Activated CD4-positive, alpha-beta T cell treated with anti-CD3 and anti-CD28 coated beads for 36 hours (primary cell): ENCODE measurements at regions of chr17 and their contacts with region 1.

Region 1: GRCh38 chr17:76384222-76384986 is at the start of gene SPHK1:
- DNase-seq: peak; percentile 86
- ATAC-seq: peak; percentile 72
- H3K4me3 Mint-ChIP-seq: peak within 1 kb of the TSS; percentile 85
- H3K27ac Mint-ChIP-seq: peak within 1 kb of the TSS; percentile 81
- H3K4me1 Mint-ChIP-seq: peaks cover 12% of the 10 kb centered on the region
- H3K27me3 Mint-ChIP-seq: no peaks in the 10 kb centered on the region
- total RNA-seq, gene SPHK1: 7.4 to 11.7 TPM

Region 2: DNA sequence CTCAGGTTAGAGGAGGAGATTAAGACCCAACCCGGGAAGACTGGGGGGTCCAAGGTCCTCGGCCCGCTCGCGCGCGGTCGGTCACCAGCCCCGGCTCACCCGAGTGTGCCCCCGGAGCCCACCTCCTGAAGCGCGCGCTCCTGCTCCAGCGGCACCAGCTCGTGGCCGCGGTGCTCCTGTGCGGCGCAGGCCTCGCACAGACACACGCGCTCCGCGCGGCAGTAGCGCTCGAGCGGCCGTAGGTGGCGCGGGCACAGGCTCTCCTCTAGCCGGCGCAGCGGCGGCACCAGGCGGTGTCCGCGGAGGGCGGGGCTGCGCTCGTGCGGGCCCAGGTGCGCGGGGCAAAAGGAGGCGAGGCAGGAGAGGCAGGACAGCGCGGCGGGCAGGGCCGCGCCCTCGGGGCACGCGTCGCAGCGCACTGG is 506.6 kb before region 1 on chr17:
- CTCF ChIA-PET with region 1: no interaction called
- POLR2A ChIA-PET with region 1: no interaction called
- intact Hi-C with region 1: loop called in 1 of 2 experiments (anchors 1 kb)
- DNase-seq: peak; percentile 87
- ATAC-seq: peak; percentile 72
- H3K4me3 Mint-ChIP-seq: peak overlapping the region; percentile 91
- H3K27ac Mint-ChIP-seq: peak overlapping the region; percentile 94
- H3K4me1 Mint-ChIP-seq: peaks cover 26% of the 10 kb centered on the region
- H3K27me3 Mint-ChIP-seq: peaks cover 2% of the 10 kb centered on the region

Region 3: GRCh38 chr17:75896415-75897159 is 487.8 kb before region 1 on chr17 and contains the start of gene TRIM65:
- CTCF ChIA-PET with region 1: no interaction called
- POLR2A ChIA-PET with region 1: no interaction called
- intact Hi-C with region 1: loop called in 1 of 2 experiments (anchors 2 kb)
- DNase-seq: peak; percentile 86
- ATAC-seq: peak; percentile 85
- H3K4me3 Mint-ChIP-seq: peak within 1 kb of the TSS; percentile 84
- H3K27ac Mint-ChIP-seq: peak within 1 kb of the TSS; percentile 72
- H3K4me1 Mint-ChIP-seq: peaks cover 19% of the 10 kb centered on the region
- H3K27me3 Mint-ChIP-seq: no peaks in the 10 kb centered on the region
- total RNA-seq, gene TRIM65: 28.9 to 31.9 TPM

Region 4: DNA sequence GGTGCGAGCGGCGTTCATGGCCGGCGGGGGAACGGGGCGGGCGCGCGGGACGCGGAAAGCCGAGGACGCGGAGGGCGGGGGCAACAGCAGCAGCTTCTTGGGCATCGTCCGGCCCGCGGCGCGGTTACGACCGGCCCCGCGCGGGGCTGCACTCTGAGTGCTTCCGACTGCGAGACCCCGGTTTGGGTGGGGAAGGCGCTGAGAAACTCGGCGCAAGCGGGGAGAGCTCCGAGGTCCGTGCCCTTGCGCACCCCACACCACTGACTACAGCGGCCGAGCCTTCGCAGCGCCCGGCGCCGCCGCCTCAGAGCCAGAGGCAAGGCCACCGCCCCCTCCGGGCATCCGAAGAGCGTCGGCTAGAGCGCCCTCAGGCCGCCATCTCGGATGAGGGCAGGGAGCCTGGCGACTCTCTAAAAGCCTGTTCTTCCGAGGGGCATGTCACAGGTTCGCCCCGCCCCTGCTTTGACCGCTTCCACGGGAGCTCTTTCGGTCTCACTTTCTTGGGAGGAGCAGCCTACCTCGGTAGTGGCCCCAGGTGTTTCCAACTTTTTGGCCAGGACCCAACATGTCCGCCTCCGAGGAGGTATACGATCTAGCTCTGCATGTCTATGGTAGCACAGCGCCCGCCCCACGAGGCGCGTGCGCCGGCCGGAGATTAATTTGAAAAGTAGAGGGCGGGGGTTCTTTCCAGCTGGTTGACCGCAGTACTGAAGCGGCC is 30.6 kb before region 1 on chr17 and contains the start of gene PRPSAP1:
- CTCF ChIA-PET with region 1: interaction called, 43 read pairs
- POLR2A ChIA-PET with region 1: interaction called, 5 read pairs
- intact Hi-C with region 1: loop called (anchors 1 to 2 kb)
- DNase-seq: peak; percentile 88
- ATAC-seq: peak; percentile 97
- H3K4me3 Mint-ChIP-seq: peak within 1 kb of the TSS; percentile 78
- H3K27ac Mint-ChIP-seq: peak within 1 kb of the TSS; percentile 96
- H3K4me1 Mint-ChIP-seq: peaks cover 18% of the 10 kb centered on the region
- H3K27me3 Mint-ChIP-seq: no peaks in the 10 kb centered on the region
- total RNA-seq, gene PRPSAP1: 26.7 to 34.9 TPM

Region 5: DNA sequence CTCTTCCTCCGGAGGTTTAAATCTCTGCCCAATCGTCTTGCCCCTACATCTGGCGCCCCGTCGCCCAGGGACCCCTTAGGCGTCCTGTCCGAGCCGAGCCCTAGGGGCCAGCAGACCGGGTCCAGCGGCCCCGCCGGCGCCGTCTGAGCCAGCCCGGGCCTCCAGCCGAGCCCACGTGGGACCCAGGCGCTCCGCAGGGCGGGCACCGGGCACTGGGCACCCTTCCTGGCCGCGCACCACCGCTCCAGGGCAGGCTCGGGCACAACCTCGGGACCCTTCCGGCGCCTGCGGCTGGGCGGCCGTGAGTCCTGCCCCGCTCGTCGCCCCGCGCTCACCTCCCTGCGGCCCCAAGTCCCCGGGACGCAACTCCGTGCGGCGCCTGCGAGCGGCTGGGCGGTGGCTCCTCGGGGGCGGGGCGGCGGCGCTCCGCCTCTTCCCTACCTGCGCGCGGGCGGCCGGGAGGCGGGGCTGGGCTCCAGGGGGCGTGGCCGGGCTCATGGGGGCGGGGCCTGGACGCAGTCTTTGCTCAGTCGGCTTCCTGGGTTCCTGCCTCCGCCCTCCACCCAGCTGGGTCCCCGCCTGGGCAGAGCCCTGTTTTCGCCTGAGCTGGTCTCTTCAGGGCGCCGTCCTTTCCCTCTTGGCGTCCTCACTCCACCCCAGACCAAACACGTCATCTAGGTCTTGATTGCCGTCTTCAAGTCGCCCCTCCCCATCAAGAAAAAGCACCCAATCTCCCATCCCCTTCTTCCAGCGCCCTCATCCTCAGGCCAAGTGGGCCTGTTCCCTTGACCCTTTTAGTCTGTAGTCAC is 116.8 kb after region 1 on chr17 and contains the start of gene RHBDF2:
- CTCF ChIA-PET with region 1: no interaction called
- POLR2A ChIA-PET with region 1: no interaction called
- intact Hi-C with region 1: loop called in 1 of 2 experiments (anchors 1 kb)
- DNase-seq: peak; percentile 98
- ATAC-seq: peak; percentile 91
- H3K4me3 Mint-ChIP-seq: peak within 1 kb of the TSS; percentile 87
- H3K27ac Mint-ChIP-seq: peak within 1 kb of the TSS; percentile 94
- H3K4me1 Mint-ChIP-seq: peaks cover 29% of the 10 kb centered on the region
- H3K27me3 Mint-ChIP-seq: no peaks in the 10 kb centered on the region
- total RNA-seq, gene RHBDF2: 23.9 to 28.4 TPM

Region 6: GRCh38 chr17:76597728-76598474 is 213.5 kb after region 1 on chr17:
- CTCF ChIA-PET with region 1: no interaction called
- POLR2A ChIA-PET with region 1: no interaction called
- intact Hi-C with region 1: no loop called
- DNase-seq: no peak
- ATAC-seq: no peak
- H3K4me3 Mint-ChIP-seq: no peak overlapping the region
- H3K27ac Mint-ChIP-seq: no peak overlapping the region
- H3K4me1 Mint-ChIP-seq: peaks cover 15% of the 10 kb centered on the region
- H3K27me3 Mint-ChIP-seq: peaks cover 9% of the 10 kb centered on the region

Region 7: DNA sequence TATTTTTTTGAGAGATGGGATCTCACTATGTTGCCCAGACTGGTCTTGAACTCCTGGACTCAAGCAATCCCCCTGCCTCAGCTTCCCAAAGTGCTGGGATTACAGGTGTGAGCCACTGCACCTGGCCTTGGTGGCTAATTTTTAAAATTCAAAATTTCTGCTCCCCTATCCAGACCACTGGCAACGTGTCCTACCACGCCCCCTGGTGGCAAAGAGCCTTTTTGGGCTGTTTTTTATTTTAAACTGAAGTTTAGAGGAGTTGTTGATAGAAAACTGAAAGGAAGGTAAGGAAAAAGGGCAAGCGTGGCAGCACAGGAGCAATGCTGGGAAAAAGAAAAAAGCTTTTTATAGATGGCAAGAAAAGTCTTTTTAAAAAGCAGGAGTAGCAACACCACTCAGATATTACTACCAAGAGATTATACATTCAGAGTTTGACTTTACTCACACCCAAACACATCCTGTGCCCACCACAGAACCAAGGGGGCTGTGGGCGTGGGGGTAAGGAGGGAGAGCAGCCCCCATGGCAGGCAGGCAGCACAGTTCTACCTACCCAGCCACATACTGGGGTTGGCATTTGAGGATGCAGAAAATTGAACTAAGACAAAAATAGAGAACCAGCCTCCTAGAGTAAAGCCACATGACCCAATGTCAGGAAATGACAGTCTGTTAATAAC is 330.6 kb after region 1 on chr17:
- CTCF ChIA-PET with region 1: no interaction called
- POLR2A ChIA-PET with region 1: no interaction called
- intact Hi-C with region 1: loop called in 1 of 2 experiments (anchors 5 kb)
- DNase-seq: peak; percentile 87
- ATAC-seq: no peak
- H3K4me3 Mint-ChIP-seq: no peak overlapping the region
- H3K27ac Mint-ChIP-seq: peak overlapping the region; percentile 68
- H3K4me1 Mint-ChIP-seq: peaks cover 38% of the 10 kb centered on the region
- H3K27me3 Mint-ChIP-seq: no peaks in the 10 kb centered on the region